ENCODE measurements at regions of chr12 and their contacts with region 1.

Region 1: DNA sequence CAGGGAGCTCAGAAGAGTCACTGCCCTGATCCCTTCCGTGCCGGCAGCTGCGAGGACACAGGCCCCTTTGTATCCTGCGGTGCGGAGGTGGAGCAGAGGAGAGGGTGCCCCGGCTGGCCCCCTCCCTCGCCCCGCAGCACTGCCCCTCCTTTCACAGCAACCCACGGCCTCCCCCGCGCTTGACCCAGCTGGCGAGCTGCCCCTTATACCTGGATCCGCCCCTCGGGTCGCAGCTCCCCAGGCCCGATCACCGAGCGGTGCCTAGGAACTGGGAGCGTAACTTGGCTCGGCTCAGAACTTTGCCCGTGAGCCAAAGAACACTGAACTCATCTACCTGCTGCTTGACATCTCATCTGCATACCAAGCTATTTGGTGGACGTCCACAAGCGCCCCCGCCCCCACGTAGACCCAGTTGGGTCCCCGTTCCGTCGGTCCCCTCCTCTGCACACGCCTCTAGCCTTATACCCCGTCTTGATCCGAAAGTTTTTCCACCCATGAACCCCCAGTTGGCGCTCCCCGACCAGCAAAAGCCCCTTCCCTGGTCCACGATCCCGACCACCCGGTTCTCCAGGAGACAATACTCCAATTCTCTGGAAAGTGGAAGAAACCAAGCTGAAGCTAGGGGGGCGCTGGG is 697 bp upstream of the DNAJC14 start:
- DNase-seq: peak in 1 of 3 donors; percentile 11
- H3K4me3 ChIP-seq: peak overlapping the region; percentile 80 to 97 (median 89)
- H3K4me3 Mint-ChIP-seq: peak overlapping the region; percentile 96
- H3K27ac ChIP-seq: peak overlapping the region; percentile 73 to 87
- H3K27ac Mint-ChIP-seq: peak overlapping the region; percentile 89 to 96 (median 94)
- H3K4me1 ChIP-seq: peaks cover 47 to 54% of the 10 kb centered on the region in 2 donors
- H3K4me1 Mint-ChIP-seq: peaks cover 52% of the 10 kb centered on the region
- H3K27me3 ChIP-seq: no peaks in the 10 kb centered on the region
- H3K27me3 Mint-ChIP-seq: peaks cover 0 to 2% (median 0%) of the 10 kb centered on the region in 3 donors
- CTCF ChIP-seq: no peak

Region 2: DNA sequence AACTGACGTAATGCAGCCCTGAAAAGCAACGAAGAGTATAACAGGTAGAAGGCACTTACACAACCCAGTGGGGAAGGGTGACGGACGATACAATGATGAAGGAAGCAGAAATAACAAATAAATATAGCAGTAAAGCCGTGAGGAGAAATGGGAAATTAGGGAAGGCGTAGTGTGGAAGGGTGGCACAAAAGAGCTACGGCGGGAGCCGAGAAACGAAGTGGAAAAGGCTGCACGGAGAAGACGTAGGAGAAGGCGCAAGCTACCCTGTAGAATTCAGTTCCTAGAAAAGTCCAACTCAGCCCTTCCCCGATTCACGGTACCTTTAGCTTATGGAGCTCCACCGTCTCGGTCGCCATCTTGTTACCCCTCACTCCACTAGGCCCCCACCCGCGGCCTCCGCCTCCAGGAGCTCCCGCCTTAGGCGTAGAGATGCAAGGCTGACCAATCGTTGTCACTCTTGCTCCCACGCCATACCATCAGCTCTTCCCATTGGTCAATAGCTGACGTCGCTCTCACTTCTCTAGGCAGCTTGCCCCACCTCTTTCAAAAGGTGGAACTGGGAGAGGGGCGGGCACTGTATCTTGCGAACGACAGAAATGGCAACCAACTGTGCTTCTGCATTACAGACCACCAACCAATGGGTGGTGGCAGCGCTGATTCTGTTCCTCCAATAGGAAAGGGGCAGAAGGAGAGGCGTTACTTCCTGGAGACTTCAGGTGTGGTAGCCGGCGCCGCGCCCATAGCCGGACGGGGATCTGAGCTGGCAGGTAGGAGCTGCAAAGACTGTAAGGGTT is 12.5 kb before region 1 on chr12 and contains the starts of genes ORMDL2 and SARNP:
- intact Hi-C with region 1: loop called in 1 of 2 experiments (anchors 1 kb)
- DNase-seq: peak; percentile 99 to 100 (median 100)
- H3K4me3 ChIP-seq: peak within 1 kb of the TSS; percentile 78 to 100 (median 99)
- H3K4me3 Mint-ChIP-seq: no peak within 1 kb of the TSS
- H3K27ac ChIP-seq: peak within 1 kb of the TSS; percentile 53 to 97
- H3K27ac Mint-ChIP-seq: no peak within 1 kb of the TSS
- H3K4me1 ChIP-seq: peaks cover 19 to 32% of the 10 kb centered on the region in 2 donors
- H3K4me1 Mint-ChIP-seq: peaks cover 23% of the 10 kb centered on the region
- H3K27me3 ChIP-seq: no peaks in the 10 kb centered on the region
- H3K27me3 Mint-ChIP-seq: no peaks in the 10 kb centered on the region
- CTCF ChIP-seq: no peak
- polyA plus RNA-seq, gene ORMDL2: 15.5 to 140 (median 137) TPM
- polyA plus RNA-seq, gene SARNP: 28.9 to 139 (median 98.6) TPM

Region 3: DNA sequence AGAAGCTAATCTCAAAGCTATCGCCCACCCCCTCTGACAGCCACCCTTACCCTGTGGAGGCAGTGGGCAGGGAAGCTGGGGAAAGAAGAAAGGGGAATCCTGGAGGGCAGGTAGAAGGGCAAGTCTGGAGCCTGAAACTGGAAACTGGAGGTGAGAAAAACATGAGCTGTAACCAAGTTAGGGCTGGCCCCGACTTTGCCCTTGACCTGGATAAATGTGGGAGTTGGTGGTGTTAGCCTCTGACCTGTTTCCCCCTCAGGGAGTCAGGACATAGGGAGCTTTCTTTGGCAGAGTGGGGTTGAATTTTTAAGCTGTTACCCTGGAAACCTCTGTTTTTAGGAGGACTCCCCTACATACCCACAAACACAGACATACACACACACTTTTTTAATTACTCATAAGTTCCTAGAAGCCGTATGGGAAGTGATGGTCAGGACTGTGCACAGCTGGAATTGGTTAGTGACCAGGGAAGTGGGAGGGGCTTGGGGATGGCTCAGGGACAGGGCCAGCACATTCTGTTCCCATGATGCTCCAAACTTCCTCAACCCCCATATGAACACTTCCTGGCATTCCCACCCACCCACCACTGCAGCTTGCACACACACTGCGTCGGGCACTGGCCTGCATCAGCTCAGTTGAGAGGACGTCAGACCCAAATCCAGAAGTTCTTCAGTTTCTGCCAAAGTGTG is 17.7 kb after region 1 on chr12:
- intact Hi-C with region 1: loop called in 1 of 2 experiments (anchors 1 kb)
- DNase-seq: peak; percentile 73 to 96 (median 89)
- H3K4me3 ChIP-seq: peak overlapping the region in 1 of 3 experiments; percentile 63
- H3K4me3 Mint-ChIP-seq: peak overlapping the region; percentile 24 to 46
- H3K27ac ChIP-seq: peak overlapping the region; percentile 73 to 92
- H3K27ac Mint-ChIP-seq: peak overlapping the region; percentile 90 to 97 (median 97)
- H3K4me1 ChIP-seq: peaks cover 22 to 25% of the 10 kb centered on the region in 2 donors
- H3K4me1 Mint-ChIP-seq: peaks cover 40% of the 10 kb centered on the region
- H3K27me3 ChIP-seq: no peaks in the 10 kb centered on the region
- H3K27me3 Mint-ChIP-seq: peaks cover 2 to 7% (median 5%) of the 10 kb centered on the region in 3 donors
- CTCF ChIP-seq: no peak

Region 4: GRCh38 chr12:55915482-55915859 is 85.4 kb after region 1 on chr12:
- intact Hi-C with region 1: no loop called
- DNase-seq: peak in 2 of 3 donors; percentile 30 to 40
- H3K4me3 ChIP-seq: no peak overlapping the region
- H3K4me3 Mint-ChIP-seq: no peak overlapping the region
- H3K27ac ChIP-seq: peak overlapping the region in 1 of 2 donors; percentile 51
- H3K27ac Mint-ChIP-seq: peak overlapping the region in 6 of 7 donors; percentile 54 to 77 (median 64)
- H3K4me1 ChIP-seq: peaks cover 10 to 17% of the 10 kb centered on the region in 2 donors
- H3K4me1 Mint-ChIP-seq: peaks cover 20% of the 10 kb centered on the region
- H3K27me3 ChIP-seq: no peaks in the 10 kb centered on the region
- H3K27me3 Mint-ChIP-seq: peaks cover 0 to 2% (median 0%) of the 10 kb centered on the region in 3 donors
- CTCF ChIP-seq: no peak